ENCODE measurements at regions of chr11 and their contacts with region 1.

Region 1: DNA sequence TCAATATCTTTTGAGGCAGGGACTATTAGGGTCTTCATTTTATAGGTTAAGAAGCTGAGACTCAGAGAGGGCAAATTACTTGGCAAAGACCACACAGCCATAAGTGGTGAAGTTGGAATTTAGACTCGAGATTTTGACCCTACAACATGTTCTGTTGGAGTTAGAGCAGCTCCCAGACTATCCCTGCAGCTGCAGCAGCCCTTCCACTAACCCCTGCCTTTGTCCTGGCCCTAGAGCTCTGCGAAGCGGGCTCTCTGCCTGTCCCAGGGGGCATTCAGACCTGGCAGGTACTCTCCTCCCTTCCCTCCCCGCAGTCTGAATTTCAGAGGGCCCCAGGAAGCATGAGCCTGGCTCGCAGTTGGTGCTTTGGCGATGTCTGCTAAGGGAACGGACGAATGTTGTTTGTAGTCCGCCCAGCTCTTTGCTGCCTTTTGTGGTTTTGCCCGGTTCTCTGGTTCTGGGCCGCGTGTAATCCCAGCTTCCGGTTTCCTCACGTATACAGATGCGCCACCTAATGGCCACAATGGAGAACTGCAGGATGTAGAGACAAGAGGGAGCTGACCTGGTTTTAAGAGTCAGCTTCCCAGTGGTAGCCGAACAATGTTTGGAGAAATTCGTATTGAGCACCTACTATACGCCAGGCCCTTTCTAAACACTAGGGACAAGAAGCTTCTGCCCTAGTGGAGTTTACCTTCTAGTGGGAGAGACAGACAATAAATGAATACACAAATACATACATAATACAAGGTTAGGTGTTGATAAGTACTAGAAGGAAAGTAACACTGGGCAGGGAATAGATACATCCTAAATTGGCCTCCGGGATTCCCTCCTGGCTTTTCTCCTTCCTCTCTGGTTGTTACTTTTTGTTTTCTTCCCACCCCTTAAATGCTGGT is 125.2 kb downstream of the ST3GAL4 start:
- DNase-seq: peak; percentile 79
- ATAC-seq: peak; percentile 90
- H3K4me3 ChIP-seq: no peak overlapping the region
- H3K27ac ChIP-seq: no peak overlapping the region
- H3K4me1 ChIP-seq: peaks cover 2 to 7% of the 10 kb centered on the region in 2 experiments; a peak in 3 of 4 replicates
- H3K27me3 ChIP-seq: no peaks in the 10 kb centered on the region
- CTCF ChIP-seq: peak; percentile 83 to 96 (median 95)
- POLR2A ChIP-seq: no peak
- RAD21 ChIP-seq: peak; percentile 81

Region 2: DNA sequence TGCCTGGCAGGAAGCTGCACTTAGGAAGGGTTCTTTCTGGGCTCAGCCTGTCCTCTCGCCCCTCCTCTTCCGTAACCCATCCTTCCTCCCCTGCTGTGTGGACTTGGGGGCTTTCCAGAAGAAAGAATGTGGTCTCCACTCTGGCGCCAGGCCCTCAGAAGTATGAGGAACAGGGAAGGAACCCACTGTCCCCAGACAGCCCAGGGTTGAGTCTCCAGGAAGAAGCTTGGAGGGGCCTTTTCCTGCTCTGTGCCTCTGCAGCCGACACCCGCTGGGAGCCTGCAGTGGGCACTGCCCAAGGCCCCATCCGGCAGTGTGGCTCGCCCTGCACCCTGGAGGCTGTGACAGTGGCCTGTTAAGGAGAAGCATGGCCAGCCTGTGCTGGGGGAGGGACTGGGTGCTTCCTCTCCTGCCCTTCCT is 12.5 kb before region 1 on chr11:
- CTCF ChIA-PET with region 1: interaction called, 14 read pairs
- POLR2A ChIA-PET with region 1: no interaction called
- RAD21 ChIA-PET with region 1: no interaction called
- intact Hi-C with region 1: no loop called
- DNase-seq: no peak
- ATAC-seq: no peak
- H3K4me3 ChIP-seq: no peak overlapping the region
- H3K27ac ChIP-seq: no peak overlapping the region
- H3K4me1 ChIP-seq: no peaks in the 10 kb centered on the region
- H3K27me3 ChIP-seq: peaks cover 14% of the 10 kb centered on the region; the same call in 1 of the 2 replicates
- CTCF ChIP-seq: no peak
- POLR2A ChIP-seq: no peak
- RAD21 ChIP-seq: no peak

Region 3: GRCh38 chr11:126862664-126863243 is 382.1 kb after region 1 on chr11:
- CTCF ChIA-PET with region 1: no interaction called
- POLR2A ChIA-PET with region 1: no interaction called
- RAD21 ChIA-PET with region 1: no interaction called
- intact Hi-C with region 1: no loop called
- DNase-seq: no peak
- ATAC-seq: no peak
- H3K4me3 ChIP-seq: no peak overlapping the region
- H3K27ac ChIP-seq: no peak overlapping the region
- H3K4me1 ChIP-seq: no peaks in the 10 kb centered on the region
- H3K27me3 ChIP-seq: peaks cover 3% of the 10 kb centered on the region; the same call in 1 of the 2 replicates
- CTCF ChIP-seq: no peak
- POLR2A ChIP-seq: no peak
- RAD21 ChIP-seq: peak; percentile 8; the same call in 1 of the 2 replicates